ENCODE measurements at regions of chr4 and their contacts with region 1.

Region 1: GRCh38 chr4:5711479-5712184 is 631 bp downstream of the EVC start:
- DNase-seq: no peak
- H3K4me3 Mint-ChIP-seq: peak overlapping the region; percentile 54
- H3K27ac Mint-ChIP-seq: no peak overlapping the region
- H3K4me1 Mint-ChIP-seq: peaks cover 5% of the 10 kb centered on the region
- H3K27me3 Mint-ChIP-seq: peaks cover 33% of the 10 kb centered on the region

Region 2: DNA sequence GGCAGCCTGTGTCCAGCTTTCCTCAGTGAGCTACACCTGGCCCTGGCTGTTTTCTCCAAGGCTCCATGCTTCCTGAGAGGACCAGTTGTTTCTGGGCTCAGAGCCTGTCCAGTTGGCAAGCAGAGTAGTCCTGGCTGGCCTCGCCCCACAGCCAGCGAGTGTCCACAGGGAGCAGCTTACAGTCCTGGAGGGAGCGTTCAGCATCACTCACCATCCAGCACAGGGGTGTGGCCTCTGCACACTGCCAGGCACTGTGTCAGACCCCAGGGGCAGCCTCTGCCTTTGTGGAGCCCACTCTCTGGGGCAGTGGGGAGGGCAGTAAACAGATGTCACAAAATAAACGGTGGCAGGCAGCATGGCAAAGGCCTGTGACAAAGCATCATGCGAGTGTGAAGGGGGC is 23.2 kb after region 1 on chr4:
- intact Hi-C with region 1: no loop called
- DNase-seq: no peak
- H3K4me3 Mint-ChIP-seq: no peak overlapping the region
- H3K27ac Mint-ChIP-seq: no peak overlapping the region
- H3K4me1 Mint-ChIP-seq: no peaks in the 10 kb centered on the region
- H3K27me3 Mint-ChIP-seq: no peaks in the 10 kb centered on the region

Region 3: DNA sequence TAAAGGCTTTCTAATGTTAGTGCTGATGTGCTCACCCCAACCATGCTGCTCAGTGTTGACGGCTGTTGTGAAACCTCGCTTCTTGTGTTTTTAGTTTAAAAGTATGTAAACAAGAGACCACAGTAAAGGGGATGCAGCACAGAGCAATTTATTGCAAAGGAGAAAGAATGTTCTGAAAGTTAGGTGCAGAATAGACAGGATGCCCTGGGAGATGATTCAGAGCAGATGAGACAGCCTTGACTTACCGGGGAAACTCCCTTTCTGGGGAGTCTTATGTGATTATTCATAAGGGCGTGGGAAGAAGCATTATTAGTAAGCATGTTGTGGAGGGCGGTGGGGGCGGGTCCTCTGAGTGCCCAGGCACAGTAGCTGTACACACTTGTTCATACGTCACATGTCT is 47.1 kb after region 1 on chr4:
- intact Hi-C with region 1: loop called (anchors 2 kb)
- DNase-seq: peak; percentile 17
- H3K4me3 Mint-ChIP-seq: no peak overlapping the region
- H3K27ac Mint-ChIP-seq: peak overlapping the region; percentile 58
- H3K4me1 Mint-ChIP-seq: peaks cover 10% of the 10 kb centered on the region
- H3K27me3 Mint-ChIP-seq: no peaks in the 10 kb centered on the region